Naive thymus-derived CD8-positive, alpha-beta T cell (primary cell): ENCODE measurements at regions of chr6 and their contacts with region 1.

Region 1: GRCh38 chr6:31834434-31835198 is 7.1 kb downstream of the HSPA1B start:
- DNase-seq: peak; percentile 64 to 92 (median 79)
- ATAC-seq: peak; percentile 76 to 80
- H3K4me3 Mint-ChIP-seq: peak overlapping the region; percentile 91 to 100 (median 97)
- H3K27ac Mint-ChIP-seq: peak overlapping the region; percentile 94 to 100 (median 99)
- H3K4me1 Mint-ChIP-seq: peaks cover 22 to 66% (median 52%) of the 10 kb centered on the region in 4 donors
- H3K27me3 Mint-ChIP-seq: no peaks in the 10 kb centered on the region

Region 2: GRCh38 chr6:30200551-30201281 is 1633.9 kb before region 1 on chr6:
- POLR2A ChIA-PET with region 1: no interaction called
- DNase-seq: no peak
- ATAC-seq: no peak
- H3K4me3 Mint-ChIP-seq: no peak overlapping the region
- H3K27ac Mint-ChIP-seq: peak overlapping the region in 7 of 10 donors; percentile 1 to 90 (median 63)
- H3K4me1 Mint-ChIP-seq: peaks cover 21 to 47% (median 41%) of the 10 kb centered on the region in 4 donors
- H3K27me3 Mint-ChIP-seq: no peaks in the 10 kb centered on the region

Region 3: GRCh38 chr6:31795616-31796298 is 38.9 kb before region 1 on chr6 and contains the start of gene VARS1:
- POLR2A ChIA-PET with region 1: interaction called, 10 read pairs
- DNase-seq: peak; percentile 63 to 91 (median 84)
- ATAC-seq: peak; percentile 86 to 87
- H3K4me3 Mint-ChIP-seq: peak within 1 kb of the TSS; percentile 88 to 97 (median 94)
- H3K27ac Mint-ChIP-seq: peak within 1 kb of the TSS; percentile 96 to 99 (median 98)
- H3K4me1 Mint-ChIP-seq: peaks cover 19 to 47% (median 46%) of the 10 kb centered on the region in 4 donors
- H3K27me3 Mint-ChIP-seq: no peaks in the 10 kb centered on the region
- polyA plus RNA-seq, gene VARS1: 27.5 to 37.8 (median 30.3) TPM

Region 4: GRCh38 chr6:31806465-31807272 is 27.9 kb before region 1 on chr6 and contains the start of gene LSM2:
- POLR2A ChIA-PET with region 1: interaction called, 18 read pairs
- DNase-seq: peak; percentile 95 to 98 (median 96)
- ATAC-seq: peak; percentile 97 to 98
- H3K4me3 Mint-ChIP-seq: peak within 1 kb of the TSS; percentile 84 to 97 (median 91)
- H3K27ac Mint-ChIP-seq: peak within 1 kb of the TSS; percentile 91 to 98 (median 94)
- H3K4me1 Mint-ChIP-seq: peaks cover 10 to 35% (median 20%) of the 10 kb centered on the region in 4 donors
- H3K27me3 Mint-ChIP-seq: no peaks in the 10 kb centered on the region
- polyA plus RNA-seq, gene LSM2: 67.1 to 80.3 (median 77.9) TPM

Region 5: GRCh38 chr6:31862344-31863227 is 28.0 kb after region 1 on chr6 and contains the start of gene NEU1:
- POLR2A ChIA-PET with region 1: interaction called, 18 read pairs
- DNase-seq: peak; percentile 90 to 100 (median 99)
- ATAC-seq: peak; percentile 91 to 97
- H3K4me3 Mint-ChIP-seq: peak within 1 kb of the TSS; percentile 87 to 98 (median 94)
- H3K27ac Mint-ChIP-seq: peak within 1 kb of the TSS; percentile 87 to 98 (median 96)
- H3K4me1 Mint-ChIP-seq: peaks cover 16 to 30% (median 27%) of the 10 kb centered on the region in 4 donors
- H3K27me3 Mint-ChIP-seq: no peaks in the 10 kb centered on the region
- polyA plus RNA-seq, gene NEU1: 10.9 to 17.9 (median 16.2) TPM

Region 6: GRCh38 chr6:31888276-31889258 is 54.0 kb after region 1 on chr6:
- POLR2A ChIA-PET with region 1: no interaction called
- DNase-seq: peak in 9 of 10 donors; percentile 32 to 78 (median 51)
- ATAC-seq: peak; percentile 35 to 58
- H3K4me3 Mint-ChIP-seq: no peak overlapping the region
- H3K27ac Mint-ChIP-seq: peak overlapping the region in 1 of 10 donors; percentile 71
- H3K4me1 Mint-ChIP-seq: peaks cover 0 to 4% (median 3%) of the 10 kb centered on the region in 4 donors
- H3K27me3 Mint-ChIP-seq: no peaks in the 10 kb centered on the region

Region 7: GRCh38 chr6:31901953-31902643 is 67.5 kb after region 1 on chr6 and contains the start of gene ZBTB12:
- POLR2A ChIA-PET with region 1: interaction called, 14 read pairs
- DNase-seq: peak; percentile 78 to 91 (median 84)
- ATAC-seq: peak; percentile 58 to 65
- H3K4me3 Mint-ChIP-seq: peak within 1 kb of the TSS; percentile 78 to 94 (median 90)
- H3K27ac Mint-ChIP-seq: peak within 1 kb of the TSS; percentile 68 to 96 (median 92)
- H3K4me1 Mint-ChIP-seq: peaks cover 22 to 36% (median 32%) of the 10 kb centered on the region in 4 donors
- H3K27me3 Mint-ChIP-seq: no peaks in the 10 kb centered on the region
- polyA plus RNA-seq, gene ZBTB12: not detected